Activated naive CD4-positive, alpha-beta T cell treated with anti-CD3 and anti-CD28 coated beads for 36 hours (primary cell): ENCODE measurements at regions of chr14 and their contacts with region 1.

Region 1: DNA sequence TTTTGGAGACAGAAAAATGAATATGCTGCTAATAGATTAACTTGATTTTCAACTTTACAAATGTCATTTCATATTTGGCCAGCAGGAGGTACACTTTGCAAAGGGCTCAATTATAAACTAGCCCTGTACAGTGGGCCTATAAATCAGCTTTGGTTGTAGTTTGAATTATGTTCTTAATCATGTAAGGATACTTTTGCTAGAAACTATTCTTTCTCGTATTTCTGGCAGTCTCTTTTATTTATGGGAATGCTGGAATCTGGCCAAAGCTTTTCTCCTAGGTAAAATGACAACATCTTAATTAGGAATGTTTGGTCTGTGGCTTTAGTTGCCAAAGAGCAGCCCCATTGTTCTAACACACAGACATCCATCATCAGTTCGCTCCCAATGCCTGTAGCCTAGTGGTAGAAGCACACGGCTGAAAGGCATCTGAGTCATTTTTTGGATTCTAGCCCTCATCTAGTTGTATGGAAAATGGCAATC is 1322.3 kb upstream of the SEL1L start:
- DNase-seq: no peak
- H3K4me3 Mint-ChIP-seq: no peak overlapping the region
- H3K27ac Mint-ChIP-seq: no peak overlapping the region
- H3K4me1 Mint-ChIP-seq: no peaks in the 10 kb centered on the region
- H3K27me3 Mint-ChIP-seq: no peaks in the 10 kb centered on the region

Region 2: DNA sequence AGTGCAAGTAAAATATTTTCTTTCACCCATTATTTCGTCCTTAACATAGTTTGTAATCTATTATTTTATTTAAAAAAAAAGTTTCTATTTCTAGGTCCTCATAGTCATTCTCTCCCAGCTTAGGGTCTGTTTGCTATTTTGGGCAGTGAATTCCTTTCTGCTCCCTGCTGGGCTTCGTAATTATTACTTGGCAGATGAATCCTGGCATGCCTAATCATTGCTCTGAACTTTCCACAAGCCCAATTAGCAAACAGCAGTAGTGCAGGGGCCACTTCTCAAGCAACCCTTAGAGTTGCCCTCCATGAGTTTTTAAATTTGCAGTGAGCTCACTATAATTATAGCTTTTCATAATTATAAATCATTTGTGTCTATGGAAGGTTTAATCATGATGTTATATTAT is 56.0 kb after region 1 on chr14:
- CTCF ChIA-PET with region 1: no interaction called
- intact Hi-C with region 1: no loop called
- DNase-seq: no peak
- H3K4me3 Mint-ChIP-seq: no peak overlapping the region
- H3K27ac Mint-ChIP-seq: no peak overlapping the region
- H3K4me1 Mint-ChIP-seq: no peaks in the 10 kb centered on the region
- H3K27me3 Mint-ChIP-seq: no peaks in the 10 kb centered on the region

Region 3: GRCh38 chr14:83463500-83464098 is 607.6 kb after region 1 on chr14:
- CTCF ChIA-PET with region 1: no interaction called
- intact Hi-C with region 1: loop called (anchors 5 kb)
- DNase-seq: peak; percentile 22
- H3K4me3 Mint-ChIP-seq: no peak overlapping the region
- H3K27ac Mint-ChIP-seq: no peak overlapping the region
- H3K4me1 Mint-ChIP-seq: no peaks in the 10 kb centered on the region
- H3K27me3 Mint-ChIP-seq: no peaks in the 10 kb centered on the region